Aorta (tissue), 5 donors: ENCODE measurements at regions of chr2 and their contacts with region 1.

Region 1: DNA sequence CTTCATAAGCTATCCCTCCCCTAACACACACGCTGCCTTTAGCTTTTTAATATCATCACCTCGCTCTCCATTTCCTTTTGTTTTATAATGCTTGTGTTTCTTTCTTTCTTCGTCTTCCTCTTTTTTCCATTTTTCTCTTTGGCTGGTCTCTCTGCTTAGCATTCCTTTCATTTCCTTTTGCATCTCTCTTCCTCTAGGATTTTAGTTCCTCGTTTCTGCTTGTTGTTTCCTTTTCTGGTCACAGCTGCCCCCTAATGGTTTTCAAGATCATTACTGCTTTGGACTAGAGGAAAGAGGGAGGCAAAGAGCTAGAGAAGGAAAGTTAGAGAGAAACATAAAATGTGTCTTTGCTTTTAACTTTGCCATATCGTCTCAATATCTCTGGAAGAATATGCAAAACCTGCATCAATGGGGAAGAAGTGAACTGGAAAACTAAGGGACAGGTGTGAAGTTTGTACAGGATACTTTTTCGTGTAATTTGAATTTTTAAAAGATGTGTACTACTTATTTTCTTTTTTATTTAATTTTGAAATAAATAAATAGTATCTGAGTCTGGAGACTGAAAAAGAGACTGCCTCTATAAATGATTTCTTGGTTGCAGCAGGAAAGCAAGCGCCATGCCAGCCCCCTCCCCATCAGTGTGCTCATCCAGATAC is 6.3 kb upstream of the NRP2 start:
- DNase-seq: no peak
- ATAC-seq: no peak
- H3K4me3 ChIP-seq: no peak overlapping the region
- H3K27ac ChIP-seq: no peak overlapping the region
- H3K4me1 ChIP-seq: no peaks in the 10 kb centered on the region
- H3K27me3 ChIP-seq: no peaks in the 10 kb centered on the region

Region 2: GRCh38 chr2:204260162-204260877 is 1415.7 kb before region 1 on chr2:
- intact Hi-C with region 1: loop called in 1 of 2 experiments (anchors 10 kb)
- DNase-seq: peak in 1 of 2 donors; percentile 74
- ATAC-seq: peak; percentile 82
- H3K4me3 ChIP-seq: no peak overlapping the region
- H3K27ac ChIP-seq: no peak overlapping the region
- H3K4me1 ChIP-seq: no peaks in the 10 kb centered on the region
- H3K27me3 ChIP-seq: no peaks in the 10 kb centered on the region

Region 3: DNA sequence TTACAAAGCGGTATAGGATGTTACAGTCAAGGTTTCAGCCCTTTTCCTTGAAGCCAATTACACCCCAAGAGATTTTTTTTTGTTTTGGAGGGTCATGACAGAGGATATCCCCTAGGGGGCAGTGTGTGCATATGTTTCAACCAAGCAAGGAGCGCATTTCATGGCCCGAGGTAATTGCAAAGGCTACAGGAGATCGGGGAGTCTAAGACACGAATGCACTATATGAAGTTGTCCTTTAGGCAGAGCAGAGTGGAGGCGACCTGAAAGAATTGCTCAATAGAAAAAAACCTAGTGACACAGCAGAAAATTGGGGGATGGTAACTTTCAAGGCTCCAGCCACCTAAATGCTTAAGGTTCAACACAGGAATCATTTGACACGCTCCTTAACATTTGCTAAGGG is 1350.5 kb before region 1 on chr2:
- intact Hi-C with region 1: loop called (anchors 5 kb)
- DNase-seq: no peak
- ATAC-seq: peak; percentile 85
- H3K4me3 ChIP-seq: no peak overlapping the region
- H3K27ac ChIP-seq: no peak overlapping the region
- H3K4me1 ChIP-seq: no peaks in the 10 kb centered on the region
- H3K27me3 ChIP-seq: peaks cover 0 to 1% of the 10 kb centered on the region in 2 donors

Region 4: GRCh38 chr2:205323929-205324328 is 352.1 kb before region 1 on chr2:
- intact Hi-C with region 1: loop called in 1 of 2 experiments (anchors 5 kb)
- DNase-seq: no peak
- ATAC-seq: no peak
- H3K4me3 ChIP-seq: no peak overlapping the region
- H3K27ac ChIP-seq: no peak overlapping the region
- H3K4me1 ChIP-seq: no peaks in the 10 kb centered on the region
- H3K27me3 ChIP-seq: no peaks in the 10 kb centered on the region

Region 5: DNA sequence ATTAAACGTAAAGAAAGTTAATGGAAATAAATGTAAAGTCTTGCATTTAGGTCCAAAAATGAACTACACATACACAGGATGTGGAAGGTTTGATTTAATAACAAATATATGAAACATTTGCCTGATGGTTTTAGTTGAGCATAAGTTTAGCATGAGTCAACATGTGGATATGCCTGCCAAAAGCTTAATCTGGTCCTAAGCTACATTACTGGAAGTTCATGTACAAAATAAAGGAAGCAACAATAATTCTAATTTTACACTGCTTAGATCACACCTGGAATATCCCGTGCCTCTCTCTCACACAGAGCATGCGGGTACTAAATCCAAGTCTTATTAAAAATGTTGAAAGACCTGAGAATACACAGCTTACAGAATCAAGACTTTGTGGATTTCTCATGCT is 270.2 kb before region 1 on chr2:
- intact Hi-C with region 1: loop called in 1 of 2 experiments (anchors 10 kb)
- DNase-seq: no peak
- ATAC-seq: peak; percentile 48
- H3K4me3 ChIP-seq: no peak overlapping the region
- H3K27ac ChIP-seq: no peak overlapping the region
- H3K4me1 ChIP-seq: peaks cover 0 to 15% of the 10 kb centered on the region in 2 donors
- H3K27me3 ChIP-seq: no peaks in the 10 kb centered on the region